ENCODE measurements at regions of chr3 and their contacts with region 1.

Region 1: DNA sequence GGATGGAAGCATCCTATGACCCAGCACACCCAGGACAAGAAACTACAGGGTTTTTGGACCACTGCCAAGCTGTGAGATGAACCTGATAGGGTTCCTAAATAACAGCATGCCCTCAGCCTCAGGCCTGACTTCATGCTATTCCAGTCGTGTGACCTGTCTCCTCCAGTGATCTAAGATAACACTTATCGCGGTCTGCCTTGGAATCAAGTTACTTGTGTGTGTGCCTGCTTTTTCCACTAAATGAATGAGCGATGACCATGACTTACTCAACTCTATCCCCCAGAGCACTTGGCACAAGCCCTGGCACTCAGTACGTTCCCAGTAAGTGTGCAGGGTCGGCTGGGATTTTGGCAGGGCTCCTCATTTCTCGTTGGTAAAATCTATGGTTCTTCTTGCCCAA is 172.7 kb upstream of the TP63 start:
- DNase-seq: peak; percentile 84 to 86
- H3K4me3 ChIP-seq: no peak overlapping the region
- H3K27ac ChIP-seq: no peak overlapping the region
- H3K4me1 ChIP-seq: peaks cover 11% of the 10 kb centered on the region
- H3K27me3 ChIP-seq: no peaks in the 10 kb centered on the region
- CTCF ChIP-seq: no peak

Region 2: DNA sequence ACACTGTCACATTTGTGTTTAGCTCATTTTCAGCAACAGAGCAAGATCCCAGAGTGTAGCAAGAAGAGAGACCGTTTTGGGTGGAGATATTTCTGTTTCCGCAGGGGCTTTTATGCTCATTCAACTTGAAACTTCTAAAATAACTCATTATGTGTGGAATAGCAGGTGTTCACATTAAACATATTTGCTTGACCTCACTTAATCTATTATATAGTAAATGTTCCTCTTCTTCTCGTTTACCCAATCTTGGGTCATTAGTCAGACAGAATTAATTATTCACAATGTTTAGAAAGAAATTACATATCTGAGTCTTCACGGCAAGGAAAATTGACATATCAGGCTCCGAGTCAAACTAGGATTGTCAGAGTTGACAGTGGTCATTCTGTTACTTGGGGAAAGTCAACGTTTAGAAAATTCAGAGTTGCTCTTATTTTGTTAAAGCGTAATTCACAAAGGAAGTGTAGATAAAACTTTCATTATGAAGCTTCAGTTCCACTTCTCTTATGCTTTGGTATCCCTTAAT is 63.9 kb before region 1 on chr3:
- CTCF ChIA-PET with region 1: no interaction called
- POLR2A ChIA-PET with region 1: no interaction called
- intact Hi-C with region 1: loop called (anchors 1 kb)
- DNase-seq: no peak
- H3K4me3 ChIP-seq: no peak overlapping the region
- H3K27ac ChIP-seq: peak overlapping the region; percentile 89
- H3K4me1 ChIP-seq: peaks cover 36% of the 10 kb centered on the region
- H3K27me3 ChIP-seq: no peaks in the 10 kb centered on the region
- CTCF ChIP-seq: no peak

Region 3: GRCh38 chr3:189512039-189512438 is 53.5 kb after region 1 on chr3:
- CTCF ChIA-PET with region 1: no interaction called
- POLR2A ChIA-PET with region 1: no interaction called
- intact Hi-C with region 1: loop called (anchors 1 kb)
- DNase-seq: no peak
- H3K4me3 ChIP-seq: no peak overlapping the region
- H3K27ac ChIP-seq: peak overlapping the region; percentile 61; the same call in 1 of the 2 replicates
- H3K4me1 ChIP-seq: peaks cover 27% of the 10 kb centered on the region
- H3K27me3 ChIP-seq: no peaks in the 10 kb centered on the region
- CTCF ChIP-seq: no peak

Region 4: DNA sequence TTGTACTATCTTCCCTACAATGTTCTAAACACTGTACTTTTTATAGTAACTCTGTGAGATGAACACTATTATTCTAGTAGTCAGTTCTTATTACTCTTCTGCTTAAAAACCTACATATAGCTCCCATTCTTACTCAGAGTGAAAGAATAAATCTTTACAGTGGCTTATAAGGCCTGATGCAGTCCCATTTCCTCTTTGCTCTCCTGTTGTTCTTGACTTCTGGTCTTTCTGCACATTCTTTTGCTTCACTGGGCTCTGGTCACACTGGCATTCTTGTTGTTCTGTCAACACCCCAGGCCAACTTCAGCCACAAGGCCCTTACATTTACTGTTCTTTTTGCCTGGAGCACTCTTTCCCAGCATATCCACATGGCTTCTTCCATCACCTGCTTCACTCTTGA is 114.5 kb after region 1 on chr3:
- CTCF ChIA-PET with region 1: no interaction called
- POLR2A ChIA-PET with region 1: no interaction called
- intact Hi-C with region 1: loop called (anchors 1 kb)
- DNase-seq: peak; percentile 26 to 39
- H3K4me3 ChIP-seq: no peak overlapping the region
- H3K27ac ChIP-seq: peak overlapping the region; percentile 91
- H3K4me1 ChIP-seq: peaks cover 30% of the 10 kb centered on the region
- H3K27me3 ChIP-seq: no peaks in the 10 kb centered on the region
- CTCF ChIP-seq: no peak

Region 5: DNA sequence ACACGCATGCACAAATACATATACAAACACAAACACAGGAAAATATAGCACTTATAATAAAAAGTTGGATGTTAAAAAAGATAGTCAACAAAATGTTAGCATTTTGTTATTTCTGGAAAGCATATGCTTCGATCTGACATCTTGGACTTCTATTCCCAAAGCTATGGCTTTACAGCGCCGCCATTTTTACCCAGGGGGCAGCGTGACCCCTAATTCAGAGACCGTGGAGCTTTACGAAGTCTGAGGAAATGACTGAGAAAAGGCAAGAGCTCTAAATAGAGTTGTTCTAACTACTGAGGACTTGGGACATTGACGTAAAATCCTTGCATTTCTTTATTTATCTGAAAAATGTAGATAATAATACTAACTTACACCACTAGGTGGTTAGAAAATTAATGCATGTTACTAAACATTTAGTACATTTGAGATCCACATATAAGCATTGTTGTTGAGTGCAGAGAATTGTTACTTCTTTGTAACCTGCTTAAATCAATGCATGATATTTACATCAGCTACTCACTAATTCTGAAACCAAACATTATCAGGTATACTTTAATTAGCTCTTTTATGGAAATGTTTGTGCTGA is 328.0 kb after region 1 on chr3:
- CTCF ChIA-PET with region 1: no interaction called
- POLR2A ChIA-PET with region 1: no interaction called
- intact Hi-C with region 1: no loop called
- DNase-seq: no peak
- H3K4me3 ChIP-seq: no peak overlapping the region
- H3K27ac ChIP-seq: no peak overlapping the region
- H3K4me1 ChIP-seq: no peaks in the 10 kb centered on the region
- H3K27me3 ChIP-seq: no peaks in the 10 kb centered on the region
- CTCF ChIP-seq: peak; percentile 39; the same call in 1 of the 2 replicates

Measured in PC-9 (cell line).